ENCODE measurements at regions of chr10 and their contacts with region 1.

Region 1: GRCh38 chr10:45464958-45465567 is 91.0 kb downstream of the ALOX5 start:
- DNase-seq: peak; percentile 63
- H3K4me3 Mint-ChIP-seq: no peak overlapping the region
- H3K27ac Mint-ChIP-seq: no peak overlapping the region
- H3K4me1 Mint-ChIP-seq: peaks cover 55% of the 10 kb centered on the region
- H3K27me3 Mint-ChIP-seq: no peaks in the 10 kb centered on the region

Region 2: GRCh38 chr10:45420453-45421192 is 44.4 kb before region 1 on chr10:
- intact Hi-C with region 1: loop called (anchors 1 kb)
- DNase-seq: peak; percentile 65
- H3K4me3 Mint-ChIP-seq: peak overlapping the region; percentile 96
- H3K27ac Mint-ChIP-seq: peak overlapping the region; percentile 98
- H3K4me1 Mint-ChIP-seq: peaks cover 91% of the 10 kb centered on the region
- H3K27me3 Mint-ChIP-seq: no peaks in the 10 kb centered on the region

Region 3: GRCh38 chr10:45580371-45581215 is 115.5 kb after region 1 on chr10:
- intact Hi-C with region 1: loop called (anchors 2 kb)
- DNase-seq: no peak
- H3K4me3 Mint-ChIP-seq: peak overlapping the region; percentile 85
- H3K27ac Mint-ChIP-seq: peak overlapping the region; percentile 92
- H3K4me1 Mint-ChIP-seq: peaks cover 31% of the 10 kb centered on the region
- H3K27me3 Mint-ChIP-seq: no peaks in the 10 kb centered on the region

Region 4: DNA sequence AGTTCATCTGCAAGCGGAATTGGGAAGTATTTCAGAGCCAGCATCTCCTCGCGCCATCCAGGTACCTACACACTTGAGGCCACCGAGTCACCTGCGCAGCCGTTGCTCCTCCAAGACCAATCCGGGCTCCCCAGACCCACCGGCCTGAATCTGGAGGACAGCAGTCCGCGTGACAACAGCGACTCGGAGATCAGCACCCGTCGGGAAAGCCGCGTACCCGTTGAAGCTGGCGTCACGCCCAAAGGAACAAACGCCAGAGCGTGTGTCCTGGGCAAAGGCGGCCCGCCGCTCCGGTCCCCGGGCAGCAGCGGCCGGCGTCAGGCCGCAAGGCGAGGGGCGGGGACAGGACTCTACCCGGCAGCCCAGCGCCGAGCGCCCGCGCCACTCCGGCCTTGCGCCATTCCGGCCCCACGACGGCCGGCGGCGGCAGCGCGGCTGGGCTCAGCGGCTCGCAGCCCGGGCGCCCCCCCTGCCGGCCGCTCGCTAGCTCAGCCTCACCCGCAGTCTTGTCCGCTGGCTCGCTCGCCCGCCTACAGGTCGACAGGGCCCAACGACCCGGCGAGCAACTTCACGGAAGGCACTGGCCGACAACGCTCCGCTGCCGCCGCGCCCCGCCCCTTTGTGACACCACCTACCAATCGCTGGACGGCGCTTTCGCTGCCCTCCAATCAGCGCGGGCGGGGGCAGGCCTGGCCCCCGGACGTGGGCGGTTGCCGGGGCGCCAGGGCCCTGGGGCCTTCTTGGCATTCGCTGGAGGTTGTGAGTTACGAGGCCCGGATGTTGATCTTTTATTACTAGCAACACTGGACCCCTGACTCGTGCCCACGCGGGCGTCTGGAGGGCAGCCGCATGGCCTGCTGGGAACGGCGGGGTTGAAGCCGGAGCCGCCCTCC is 207.4 kb after region 1 on chr10 and contains the start of gene ZFAND4:
- intact Hi-C with region 1: loop called (anchors 2 kb)
- DNase-seq: peak; percentile 94
- H3K4me3 Mint-ChIP-seq: peak within 1 kb of the TSS; percentile 87
- H3K27ac Mint-ChIP-seq: peak within 1 kb of the TSS; percentile 79
- H3K4me1 Mint-ChIP-seq: peaks cover 30% of the 10 kb centered on the region
- H3K27me3 Mint-ChIP-seq: no peaks in the 10 kb centered on the region
- total RNA-seq, gene ZFAND4: 11.1 and 11.5 TPM in 2 replicates

Region 5: DNA sequence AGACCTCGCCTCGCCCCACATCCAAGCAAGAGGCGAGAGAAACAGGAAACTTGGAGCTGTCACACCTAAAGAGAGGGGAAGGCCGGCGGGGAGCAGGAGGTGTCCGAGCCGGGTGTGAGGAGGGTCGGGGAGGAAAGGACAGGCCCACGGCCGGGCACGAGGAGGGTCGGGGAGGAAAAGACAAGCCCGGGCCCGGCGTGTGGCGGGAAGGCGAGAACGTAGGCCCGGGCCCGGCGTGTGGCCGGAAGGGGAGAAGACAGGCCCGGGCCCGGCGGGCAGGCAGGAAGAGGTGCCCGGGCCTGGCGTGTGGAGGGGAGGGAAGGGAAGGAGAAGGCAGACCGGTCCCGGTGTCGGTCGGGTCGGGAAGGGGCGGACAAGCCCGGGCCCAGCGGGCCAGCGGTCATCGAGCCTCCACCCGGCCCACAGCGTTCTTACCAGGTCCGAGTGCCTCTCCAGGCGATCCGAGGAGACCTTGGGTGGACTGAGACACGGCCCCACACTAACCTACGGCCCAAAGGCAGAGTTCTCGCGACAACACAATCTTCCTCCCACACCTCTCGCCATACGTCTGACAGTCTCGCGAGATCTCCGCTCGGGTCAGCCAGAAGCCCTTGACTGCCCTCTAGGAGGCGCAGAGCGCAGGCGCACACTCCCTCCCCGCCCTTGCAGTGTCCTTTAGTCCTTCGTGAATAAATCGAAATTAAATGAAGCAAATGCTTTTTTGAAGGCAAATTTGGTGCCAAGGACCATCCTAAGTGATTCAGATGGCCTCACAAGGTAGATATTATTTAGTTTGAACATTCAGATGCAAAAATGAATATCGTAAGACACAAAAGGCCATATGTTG is 565.3 kb after region 1 on chr10 and contains the start of gene NCOA4:
- intact Hi-C with region 1: loop called (anchors 2 kb)
- DNase-seq: peak; percentile 93
- H3K4me3 Mint-ChIP-seq: peak within 1 kb of the TSS; percentile 95
- H3K27ac Mint-ChIP-seq: peak within 1 kb of the TSS; percentile 91
- H3K4me1 Mint-ChIP-seq: peaks cover 45% of the 10 kb centered on the region
- H3K27me3 Mint-ChIP-seq: no peaks in the 10 kb centered on the region
- total RNA-seq, gene NCOA4: 101 and 102 TPM in 2 replicates